Activated T-helper 1 cell treated with anti-CD3 and anti-CD28 coated beads, Interleukin-12 subunit alpha, Interleukin-12 subunit beta, Interleukin-2, Interleukin-4 antibody, amounts not matched to agents 30 ng/mL and 10 ng/mL and 1 ng/mL, durations not matched to agents 14 hours and 24 hours and 36 hours (primary cell): ENCODE measurements at regions of chr11 and their contacts with region 1.

Region 1: GRCh38 chr11:61061081-61061826 is 41.0 kb upstream of the CD5 start:
- DNase-seq: peak; percentile 76
- H3K4me3 Mint-ChIP-seq: peak overlapping the region; percentile 70
- H3K27ac Mint-ChIP-seq: peak overlapping the region; percentile 88
- H3K4me1 Mint-ChIP-seq: peaks cover 77% of the 10 kb centered on the region
- H3K27me3 Mint-ChIP-seq: no peaks in the 10 kb centered on the region

Region 2: DNA sequence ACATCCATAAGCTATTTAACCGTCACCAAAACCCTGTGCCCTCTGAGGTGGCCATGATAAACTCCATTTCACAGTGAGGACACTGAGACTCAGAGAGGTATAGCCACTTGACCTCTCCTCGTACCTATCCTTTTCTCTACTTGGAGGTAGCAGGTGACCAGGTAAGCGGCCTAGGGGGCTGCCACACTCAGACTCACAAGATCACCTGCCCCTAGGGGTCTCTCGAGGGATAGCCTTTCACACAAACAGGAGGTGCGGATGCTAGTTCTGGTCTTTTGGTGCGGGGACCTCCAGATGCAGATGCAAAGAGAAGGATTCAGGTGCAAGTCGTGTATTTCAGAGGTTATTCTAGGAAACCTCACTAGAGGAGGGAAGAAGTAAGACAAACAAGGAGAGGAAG is 322.1 kb before region 1 on chr11:
- intact Hi-C with region 1: no loop called
- DNase-seq: no peak
- H3K4me3 Mint-ChIP-seq: no peak overlapping the region
- H3K27ac Mint-ChIP-seq: no peak overlapping the region
- H3K4me1 Mint-ChIP-seq: no peaks in the 10 kb centered on the region
- H3K27me3 Mint-ChIP-seq: peaks cover 2% of the 10 kb centered on the region

Region 3: GRCh38 chr11:60913793-60914632 is 147.2 kb before region 1 on chr11 and contains the start of gene TMEM109:
- intact Hi-C with region 1: loop called (anchors 1 kb)
- DNase-seq: peak; percentile 83
- H3K4me3 Mint-ChIP-seq: peak within 1 kb of the TSS; percentile 96
- H3K27ac Mint-ChIP-seq: peak within 1 kb of the TSS; percentile 98
- H3K4me1 Mint-ChIP-seq: peaks cover 62% of the 10 kb centered on the region
- H3K27me3 Mint-ChIP-seq: peaks cover 12% of the 10 kb centered on the region
- total RNA-seq, gene TMEM109: 138 and 143 TPM in 2 replicates

Region 4: GRCh38 chr11:60992842-60993409 is 68.3 kb before region 1 on chr11:
- intact Hi-C with region 1: loop called (anchors 1 kb)
- DNase-seq: no peak
- H3K4me3 Mint-ChIP-seq: peak overlapping the region; percentile 68
- H3K27ac Mint-ChIP-seq: peak overlapping the region; percentile 95
- H3K4me1 Mint-ChIP-seq: peaks cover 72% of the 10 kb centered on the region
- H3K27me3 Mint-ChIP-seq: no peaks in the 10 kb centered on the region

Region 5: GRCh38 chr11:61041755-61042518 is 19.3 kb before region 1 on chr11:
- intact Hi-C with region 1: loop called (anchors 1 kb)
- DNase-seq: peak; percentile 86
- H3K4me3 Mint-ChIP-seq: peak overlapping the region; percentile 72
- H3K27ac Mint-ChIP-seq: peak overlapping the region; percentile 91
- H3K4me1 Mint-ChIP-seq: peaks cover 55% of the 10 kb centered on the region
- H3K27me3 Mint-ChIP-seq: no peaks in the 10 kb centered on the region

Region 6: GRCh38 chr11:61102667-61103571 is 41.7 kb after region 1 on chr11:
- intact Hi-C with region 1: loop called (anchors 1 kb)
- DNase-seq: no peak
- H3K4me3 Mint-ChIP-seq: no peak overlapping the region
- H3K27ac Mint-ChIP-seq: no peak overlapping the region
- H3K4me1 Mint-ChIP-seq: peaks cover 46% of the 10 kb centered on the region
- H3K27me3 Mint-ChIP-seq: no peaks in the 10 kb centered on the region

Region 7: GRCh38 chr11:61129639-61130523 is 68.6 kb after region 1 on chr11:
- intact Hi-C with region 1: loop called (anchors 1 kb)
- DNase-seq: peak; percentile 82
- H3K4me3 Mint-ChIP-seq: peak overlapping the region; percentile 63
- H3K27ac Mint-ChIP-seq: peak overlapping the region; percentile 65
- H3K4me1 Mint-ChIP-seq: peaks cover 16% of the 10 kb centered on the region
- H3K27me3 Mint-ChIP-seq: no peaks in the 10 kb centered on the region

Region 8: DNA sequence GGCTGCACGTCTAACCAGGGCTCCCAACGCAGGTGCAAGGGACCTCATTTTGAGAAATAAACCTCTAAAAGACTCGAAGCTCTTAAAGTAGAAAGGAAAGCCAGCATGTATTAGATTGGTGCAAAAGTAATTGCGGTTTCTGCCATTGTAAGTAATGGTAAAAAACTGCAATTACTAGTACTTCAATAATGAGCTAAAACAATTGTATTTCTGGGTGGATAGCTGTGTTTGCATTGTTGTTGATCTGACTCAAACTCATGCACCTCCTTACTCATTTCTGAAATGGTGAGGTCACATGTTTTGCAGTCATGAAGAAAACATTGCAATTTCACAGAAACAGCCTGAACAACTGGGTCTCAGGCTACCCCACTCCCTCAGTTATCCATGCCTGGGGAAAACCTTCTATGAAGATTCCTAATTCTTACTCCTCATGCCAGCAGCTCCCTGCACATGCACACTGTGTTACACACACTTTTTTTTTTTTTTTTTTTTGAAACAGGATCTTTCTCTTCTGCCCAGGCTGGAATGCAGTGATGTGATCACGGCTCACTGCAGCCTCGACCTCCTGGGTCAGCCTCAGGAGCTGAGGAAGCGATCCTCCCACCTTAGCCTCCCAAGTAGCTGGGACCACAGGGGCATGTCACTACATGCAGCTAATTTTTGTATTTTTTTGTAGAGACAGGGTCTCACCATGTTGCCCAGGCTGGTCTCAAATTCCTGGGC is 209.3 kb after region 1 on chr11:
- intact Hi-C with region 1: loop called (anchors 5 kb)
- DNase-seq: peak; percentile 17
- H3K4me3 Mint-ChIP-seq: peak overlapping the region; percentile 3
- H3K27ac Mint-ChIP-seq: peak overlapping the region; percentile 58
- H3K4me1 Mint-ChIP-seq: peaks cover 8% of the 10 kb centered on the region
- H3K27me3 Mint-ChIP-seq: no peaks in the 10 kb centered on the region